PC-3 (cell line): ENCODE measurements at regions of chr6 and their contacts with region 1.

Region 1: DNA sequence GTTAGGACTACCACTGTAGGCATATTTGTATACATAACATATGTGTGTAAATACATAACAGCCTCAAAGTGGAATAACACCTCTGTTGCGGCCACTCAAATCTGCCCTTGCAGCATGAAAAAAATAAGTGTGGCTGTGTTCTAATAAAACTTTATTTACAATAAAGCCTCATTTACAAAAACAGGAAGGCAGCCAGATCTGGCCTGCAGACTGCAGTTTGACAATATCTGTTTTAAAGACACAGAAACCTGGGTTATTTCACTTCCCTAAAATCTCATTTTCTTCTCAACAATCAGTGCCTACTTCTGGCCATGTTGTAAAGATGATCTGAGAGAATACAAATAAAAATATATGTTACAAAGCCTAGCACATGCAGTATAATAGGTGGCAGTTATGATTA is 53.9 kb upstream of the SCML4 start:
- DNase-seq: no peak
- ATAC-seq: no peak
- H3K4me3 ChIP-seq: no peak overlapping the region
- H3K27ac ChIP-seq: no peak overlapping the region
- H3K4me1 ChIP-seq: no peaks in the 10 kb centered on the region
- H3K27me3 ChIP-seq: no peaks in the 10 kb centered on the region
- CTCF ChIP-seq: no peak

Region 2: DNA sequence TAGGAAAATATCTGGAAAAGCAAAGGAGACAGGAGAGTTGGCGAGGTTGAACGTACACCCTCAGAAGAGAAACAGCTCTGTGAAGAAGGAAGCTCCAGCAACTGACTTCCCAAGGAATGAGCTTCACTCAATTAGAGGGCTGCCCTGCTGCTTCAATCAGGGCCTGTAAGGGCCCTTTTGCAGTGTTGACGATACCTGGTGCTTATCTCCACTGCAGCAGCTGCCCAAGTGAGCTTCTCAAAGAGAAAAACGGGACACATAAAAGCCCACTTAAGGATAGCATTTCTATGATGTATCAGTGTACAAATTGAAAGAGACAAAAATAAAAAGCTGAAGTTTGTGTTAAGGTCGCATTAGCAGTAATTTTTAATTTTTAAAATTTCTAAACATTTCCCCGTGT is 63.7 kb after region 1 on chr6:
- CTCF ChIA-PET with region 1: no interaction called
- POLR2A ChIA-PET with region 1: interaction called, 11 read pairs
- intact Hi-C with region 1: no loop called
- DNase-seq: no peak
- ATAC-seq: no peak
- H3K4me3 ChIP-seq: no peak overlapping the region
- H3K27ac ChIP-seq: no peak overlapping the region
- H3K4me1 ChIP-seq: no peaks in the 10 kb centered on the region
- H3K27me3 ChIP-seq: no peaks in the 10 kb centered on the region
- CTCF ChIP-seq: no peak